ENCODE measurements at regions of chr17 and their contacts with region 1.

Region 1: GRCh38 chr17:7687908-7688807 is at the start of gene WRAP53:
- DNase-seq: peak; percentile 94 to 98
- ATAC-seq: peak; percentile 93 to 96 (median 95)
- H3K4me3 ChIP-seq: peak within 1 kb of the TSS; percentile 68 to 97 (median 80)
- H3K27ac ChIP-seq: peak within 1 kb of the TSS; percentile 84 to 97 (median 94)
- H3K4me1 ChIP-seq: peaks cover 6 to 36% (median 25%) of the 10 kb centered on the region in 9 donors
- H3K27me3 ChIP-seq: no peaks in the 10 kb centered on the region
- CTCF ChIP-seq: peak in 8 of 9 donors; percentile 97 to 100 (median 100)
- total RNA-seq, gene WRAP53: 3.8 to 5.8 (median 4.7) TPM

Region 2: DNA sequence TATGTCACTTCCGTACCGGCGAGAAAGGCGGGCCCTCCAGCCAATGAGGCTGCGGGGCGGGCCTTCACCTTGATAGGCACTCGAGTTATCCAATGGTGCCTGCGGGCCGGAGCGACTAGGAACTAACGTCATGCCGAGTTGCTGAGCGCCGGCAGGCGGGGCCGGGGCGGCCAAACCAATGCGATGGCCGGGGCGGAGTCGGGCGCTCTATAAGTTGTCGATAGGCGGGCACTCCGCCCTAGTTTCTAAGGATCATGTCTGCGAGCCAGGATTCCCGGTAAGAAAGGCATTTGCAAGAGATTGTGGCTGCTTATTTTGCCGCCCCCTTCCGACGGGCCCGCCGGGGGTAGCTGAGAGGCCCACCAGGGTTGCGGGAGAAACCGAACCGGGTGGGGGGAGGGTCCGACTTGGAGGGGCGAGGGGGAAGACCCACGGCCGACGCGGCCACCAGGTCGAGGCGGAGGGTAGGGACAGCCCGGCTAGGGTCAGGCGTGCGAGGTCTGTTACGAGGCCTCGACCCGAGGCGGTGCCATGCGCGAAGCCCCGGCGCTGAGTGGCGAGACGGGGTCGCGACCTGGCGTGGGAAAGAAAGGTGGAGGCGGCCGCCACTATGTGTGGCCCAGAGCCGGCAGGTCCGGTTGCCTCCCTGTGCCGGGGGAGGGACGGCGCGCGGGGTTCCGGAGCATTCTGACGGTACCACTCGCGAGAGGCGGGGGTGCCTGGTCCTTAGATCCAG is 115.4 kb before region 1 on chr17:
- intact Hi-C with region 1: loop called in 1 of 10 experiments (anchors 2 kb)
- DNase-seq: peak in 1 of 2 donors; percentile 100
- ATAC-seq: peak; percentile 93 to 97 (median 94)
- H3K4me3 ChIP-seq: peak overlapping the region; percentile 87 to 100 (median 98)
- H3K27ac ChIP-seq: peak overlapping the region; percentile 95 to 100 (median 99)
- H3K4me1 ChIP-seq: peaks cover 14 to 53% (median 33%) of the 10 kb centered on the region in 9 donors
- H3K27me3 ChIP-seq: no peaks in the 10 kb centered on the region
- CTCF ChIP-seq: peak in 1 of 9 donors; percentile 6

Region 3: DNA sequence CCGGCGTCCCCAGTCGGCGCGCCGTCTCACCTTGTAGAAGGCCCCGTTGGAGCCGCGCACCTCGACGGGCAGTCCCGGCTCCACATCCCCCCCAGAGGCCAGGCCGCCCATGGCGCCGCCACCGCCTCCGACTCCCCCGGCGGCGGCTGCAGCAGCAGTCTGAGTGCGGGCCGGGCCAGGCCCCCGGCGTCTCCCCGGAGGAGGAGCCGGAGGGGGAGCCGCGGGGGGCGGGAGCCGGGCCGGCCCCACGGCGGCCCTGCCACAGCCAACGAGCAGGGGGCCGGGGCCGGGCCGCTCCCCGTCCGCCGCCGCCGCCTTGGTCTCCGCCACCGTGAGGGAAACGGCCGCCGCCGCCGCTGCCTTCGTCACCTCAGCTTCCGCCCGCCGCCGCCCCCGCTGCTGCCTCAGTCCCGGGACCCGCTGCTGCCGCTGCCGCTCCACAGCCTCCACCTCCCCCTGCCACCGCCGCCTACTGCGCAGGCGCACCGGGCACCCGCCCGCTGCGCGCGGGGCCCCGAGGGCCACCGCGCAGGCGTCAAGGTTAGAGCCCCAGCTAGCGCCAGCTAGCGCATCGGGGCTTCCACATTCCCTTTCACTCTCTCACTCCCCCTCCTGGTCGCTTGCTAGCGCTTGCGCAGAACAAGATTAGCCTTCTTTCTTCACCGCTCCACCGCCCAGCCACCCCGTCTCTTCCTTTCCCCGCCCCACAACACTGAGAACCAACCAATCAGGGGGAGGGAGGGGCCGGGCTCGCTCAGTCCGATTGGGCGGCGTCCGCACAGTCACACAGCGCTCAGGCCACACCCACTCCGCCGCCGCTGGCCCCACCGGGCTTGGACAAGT is 73.5 kb before region 1 on chr17 and contains the start of gene FXR2:
- intact Hi-C with region 1: loop called in 2 of 10 experiments (anchors 2 to 5 kb)
- DNase-seq: peak; percentile 99 to 100
- ATAC-seq: peak; percentile 97 to 99 (median 99)
- H3K4me3 ChIP-seq: peak within 1 kb of the TSS; percentile 45 to 96 (median 88)
- H3K27ac ChIP-seq: peak within 1 kb of the TSS; percentile 76 to 98 (median 92)
- H3K4me1 ChIP-seq: peaks cover 2 to 52% (median 34%) of the 10 kb centered on the region in 9 donors
- H3K27me3 ChIP-seq: no peaks in the 10 kb centered on the region
- CTCF ChIP-seq: peak in 8 of 9 donors; percentile 58 to 84 (median 72)
- total RNA-seq, gene FXR2: 81.7 to 104 (median 90.5) TPM

Region 4: DNA sequence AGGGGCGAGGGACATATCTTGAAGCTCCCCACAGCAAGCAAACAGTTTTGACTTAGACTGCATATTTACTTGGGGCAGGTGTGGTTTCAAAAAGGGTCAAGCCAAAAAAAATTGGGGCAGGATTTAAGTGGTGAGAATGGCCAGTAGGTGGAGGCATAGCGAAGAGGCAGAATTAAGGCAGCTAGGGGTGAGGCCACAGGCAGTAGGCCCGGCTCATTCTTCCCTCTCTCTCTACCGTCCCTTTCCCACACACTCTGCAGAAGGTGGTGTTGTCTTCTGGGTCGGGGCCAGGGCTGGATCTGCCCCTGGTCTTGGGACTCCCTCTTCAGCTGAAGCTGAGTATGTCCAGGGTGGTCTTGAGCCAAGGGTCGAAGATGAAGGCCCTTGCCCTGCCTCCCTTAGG is 55.7 kb before region 1 on chr17:
- intact Hi-C with region 1: loop called in 9 of 10 experiments (anchors 1 to 10 kb)
- DNase-seq: peak in 1 of 2 donors; percentile 17
- ATAC-seq: peak in 2 of 8 donors; percentile 29 to 36
- H3K4me3 ChIP-seq: no peak overlapping the region
- H3K27ac ChIP-seq: no peak overlapping the region
- H3K4me1 ChIP-seq: peaks cover 3 to 25% (median 6%) of the 10 kb centered on the region in 9 donors
- H3K27me3 ChIP-seq: no peaks in the 10 kb centered on the region
- CTCF ChIP-seq: peak; percentile 11 to 56 (median 48)

Region 5: DNA sequence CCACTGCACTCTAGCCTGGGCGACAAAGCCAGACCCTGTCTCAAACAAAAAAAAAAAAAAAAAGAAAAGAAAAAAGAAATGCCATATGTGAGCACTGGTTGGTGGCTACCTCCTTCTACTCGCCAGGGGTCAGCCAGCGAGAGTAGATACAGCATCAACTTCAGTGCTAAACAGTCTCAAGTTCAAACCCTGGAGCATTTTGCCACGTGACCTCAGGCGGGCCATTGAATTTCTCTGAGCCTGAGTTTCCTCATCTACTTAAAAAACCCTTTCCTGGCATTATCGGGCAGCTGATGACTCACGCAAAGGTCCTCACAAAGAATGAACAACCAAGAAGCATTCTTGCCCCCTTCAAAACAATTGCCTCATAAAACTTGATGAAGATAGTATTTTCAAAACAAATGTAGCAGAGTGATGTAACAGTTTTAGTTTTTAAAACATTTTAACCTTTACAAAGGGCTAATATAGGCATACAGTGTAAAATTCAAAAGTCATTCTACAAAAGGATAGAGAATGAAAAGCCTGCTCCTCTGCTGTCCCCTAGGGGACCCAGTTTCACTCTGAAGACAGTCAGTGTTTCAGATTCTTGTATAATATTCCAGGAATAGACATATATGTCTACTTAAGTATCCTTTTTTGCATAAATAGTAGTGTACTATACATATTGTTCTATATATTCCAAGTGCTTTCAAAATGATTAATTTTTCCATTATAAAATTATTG is 57.8 kb after region 1 on chr17:
- intact Hi-C with region 1: no loop called
- DNase-seq: no peak
- ATAC-seq: peak in 1 of 8 donors; percentile 37
- H3K4me3 ChIP-seq: no peak overlapping the region
- H3K27ac ChIP-seq: no peak overlapping the region
- H3K4me1 ChIP-seq: peaks cover 0 to 18% (median 8%) of the 10 kb centered on the region in 9 donors
- H3K27me3 ChIP-seq: peaks cover 0 to 18% (median 9%) of the 10 kb centered on the region in 7 donors
- CTCF ChIP-seq: peak in 1 of 9 donors; percentile 8

Region 6: DNA sequence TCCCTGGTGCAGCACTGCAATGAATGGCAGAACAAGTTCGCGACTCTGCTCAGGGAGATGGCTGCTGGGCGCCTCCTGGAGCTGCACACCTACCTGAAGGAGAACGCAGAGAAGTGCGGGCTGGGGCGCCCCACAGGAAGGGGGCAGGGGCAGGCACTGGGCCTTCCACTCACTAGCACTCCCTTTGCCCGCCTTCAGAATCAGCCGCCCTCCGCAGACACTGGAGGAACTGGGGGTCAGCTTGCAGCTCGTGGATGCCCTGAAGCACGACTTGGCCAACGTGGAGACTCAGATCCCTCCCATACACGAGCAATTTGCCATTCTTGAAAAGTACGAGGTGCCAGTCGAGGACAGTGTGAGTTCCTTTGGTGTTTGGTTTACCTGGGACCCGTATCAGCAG is 75.8 kb after region 1 on chr17:
- intact Hi-C with region 1: no loop called
- DNase-seq: no peak
- ATAC-seq: no peak
- H3K4me3 ChIP-seq: no peak overlapping the region
- H3K27ac ChIP-seq: no peak overlapping the region
- H3K4me1 ChIP-seq: no peaks in the 10 kb centered on the region
- H3K27me3 ChIP-seq: peaks cover 0 to 9% (median 2%) of the 10 kb centered on the region in 7 donors
- CTCF ChIP-seq: no peak

Measured in heart right ventricle (tissue), 16 donors.